OCI-LY7 (cell line): ENCODE measurements at regions of chr7 and their contacts with region 1.

Region 1: DNA sequence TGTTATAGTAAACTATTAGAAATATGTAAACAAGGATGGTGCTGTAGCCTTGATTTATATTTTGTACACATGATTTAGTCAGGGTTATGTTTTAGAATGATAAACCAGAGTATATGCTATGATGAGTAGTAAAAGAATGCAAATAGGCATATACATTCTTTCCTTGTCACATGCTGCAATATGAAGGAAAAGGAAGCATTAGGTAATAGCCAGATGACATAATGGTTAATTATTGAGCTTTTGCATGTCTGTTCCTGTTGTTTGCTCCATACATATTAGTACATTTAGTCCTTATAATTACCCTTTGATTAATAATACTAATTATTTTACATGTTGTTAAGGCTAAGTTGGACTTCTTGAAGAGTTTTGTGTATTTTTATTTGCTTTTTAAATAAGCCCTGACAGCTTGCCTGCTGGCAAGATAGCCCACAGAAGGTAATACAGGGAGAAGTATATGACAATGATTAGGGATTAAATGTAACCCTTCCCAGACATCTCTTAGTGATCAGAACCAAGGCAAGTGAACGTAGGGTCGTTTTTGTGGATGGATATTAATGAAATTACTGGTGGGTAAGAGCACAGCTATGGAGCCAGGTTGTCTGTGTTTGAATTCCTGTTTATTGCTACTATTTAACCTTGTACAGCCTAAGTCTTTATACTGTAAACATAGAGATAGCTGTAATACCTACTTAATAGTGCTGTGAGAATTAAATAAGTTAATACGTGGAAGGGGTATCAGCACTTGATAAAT is 68.4 kb downstream of the PHTF2 start:
- DNase-seq: no peak
- H3K4me3 ChIP-seq: no peak overlapping the region
- H3K27ac ChIP-seq: no peak overlapping the region
- H3K4me1 ChIP-seq: no peaks in the 10 kb centered on the region
- CTCF ChIP-seq: no peak

Region 2: GRCh38 chr7:77657427-77658224 is 209.3 kb before region 1 on chr7:
- CTCF ChIA-PET with region 1: no interaction called
- POLR2A ChIA-PET with region 1: no interaction called
- intact Hi-C with region 1: no loop called
- DNase-seq: peak; percentile 74
- H3K4me3 ChIP-seq: no peak overlapping the region
- H3K27ac ChIP-seq: no peak overlapping the region
- H3K4me1 ChIP-seq: no peaks in the 10 kb centered on the region
- CTCF ChIP-seq: peak; percentile 97

Region 3: DNA sequence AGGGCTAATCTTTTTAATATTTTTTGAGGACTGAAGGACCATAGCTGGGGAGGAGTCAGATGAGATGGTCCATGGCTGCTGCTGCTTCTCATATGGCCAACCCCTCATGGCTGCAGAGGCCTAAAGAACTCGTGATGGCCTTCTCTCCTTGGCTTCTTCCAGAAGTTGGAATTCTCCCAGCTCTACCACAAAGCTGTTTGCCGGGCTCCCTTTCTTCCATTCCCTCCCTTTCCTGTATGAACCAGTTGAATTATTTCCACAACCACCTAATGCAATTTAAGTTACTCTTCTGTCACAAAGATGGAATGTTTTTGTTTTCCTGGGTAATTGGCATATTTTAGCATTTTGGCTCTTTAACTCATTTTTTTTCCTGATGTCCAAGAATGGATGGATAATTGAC is 12.3 kb after region 1 on chr7:
- CTCF ChIA-PET with region 1: no interaction called
- POLR2A ChIA-PET with region 1: interaction called, 12 read pairs
- intact Hi-C with region 1: no loop called
- DNase-seq: no peak
- H3K4me3 ChIP-seq: no peak overlapping the region
- H3K27ac ChIP-seq: no peak overlapping the region
- H3K4me1 ChIP-seq: no peaks in the 10 kb centered on the region
- CTCF ChIP-seq: no peak

Region 4: DNA sequence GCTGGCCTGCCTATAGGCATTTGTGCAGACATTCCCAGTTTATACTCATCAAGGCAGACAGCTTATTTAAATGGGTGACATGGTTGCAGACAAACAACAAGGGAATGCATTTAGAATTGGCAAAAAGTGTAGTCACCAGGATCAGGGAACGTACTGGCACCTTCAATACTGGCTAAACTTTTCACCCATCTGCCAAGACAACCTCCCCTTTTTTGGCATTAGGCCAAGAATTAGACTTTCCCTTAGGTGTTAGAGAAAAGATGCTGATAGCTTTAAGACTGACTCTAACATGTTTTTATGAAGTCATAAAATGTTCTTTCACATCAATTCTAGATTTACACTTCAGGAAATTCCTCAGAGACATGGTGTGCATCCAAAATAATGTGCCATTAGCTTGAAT is 297.5 kb after region 1 on chr7:
- CTCF ChIA-PET with region 1: no interaction called
- POLR2A ChIA-PET with region 1: no interaction called
- intact Hi-C with region 1: no loop called
- DNase-seq: no peak
- H3K4me3 ChIP-seq: no peak overlapping the region
- H3K27ac ChIP-seq: no peak overlapping the region
- H3K4me1 ChIP-seq: no peaks in the 10 kb centered on the region
- CTCF ChIP-seq: no peak